K562 (cell line): ENCODE measurements at regions of chr18 and their contacts with region 1.

Region 1: DNA sequence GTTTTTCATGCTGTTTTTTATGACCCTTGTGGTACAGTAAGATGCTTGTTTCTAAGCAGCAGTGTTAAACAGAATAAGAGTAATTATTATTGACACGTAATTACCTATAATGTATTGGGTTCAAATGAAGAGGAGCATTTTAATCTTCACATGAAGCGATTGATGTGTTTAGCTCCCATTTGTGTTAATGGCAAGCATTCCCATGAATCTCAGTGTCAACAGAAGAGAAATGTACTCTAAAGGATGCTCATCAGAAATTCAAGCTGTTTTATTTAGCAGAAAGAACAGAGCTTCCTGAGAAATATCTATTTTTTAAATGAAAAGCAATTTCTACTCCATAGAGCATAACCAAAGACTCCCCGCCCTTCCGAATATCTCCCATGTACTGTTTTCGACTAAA is 341.3 kb upstream of the LINC00305 start:
- DNase-seq: no peak
- ATAC-seq: no peak
- H3K4me3 ChIP-seq: no peak overlapping the region
- H3K27ac ChIP-seq: no peak overlapping the region
- H3K4me1 ChIP-seq: no peaks in the 10 kb centered on the region
- H3K27me3 ChIP-seq: no peaks in the 10 kb centered on the region
- CTCF ChIP-seq: no peak
- EP300 ChIP-seq: no peak
- POLR2A ChIP-seq: no peak
- RAD21 ChIP-seq: no peak

Region 2: GRCh38 chr18:64966667-64967066 is 476.5 kb after region 1 on chr18:
- CTCF ChIA-PET with region 1: no interaction called
- POLR2A ChIA-PET with region 1: no interaction called
- in situ Hi-C with region 1: loop called (anchors 10 kb)
- intact Hi-C with region 1: no loop called
- DNase-seq: no peak
- ATAC-seq: no peak
- H3K4me3 ChIP-seq: no peak overlapping the region
- H3K27ac ChIP-seq: no peak overlapping the region
- H3K4me1 ChIP-seq: no peaks in the 10 kb centered on the region
- H3K27me3 ChIP-seq: no peaks in the 10 kb centered on the region
- CTCF ChIP-seq: no peak
- EP300 ChIP-seq: no peak
- POLR2A ChIP-seq: no peak
- RAD21 ChIP-seq: no peak